MCF 10A (cell line): ENCODE measurements at regions of chr1 and their contacts with region 1.

Region 1: GRCh38 chr1:93345633-93346420 is at the start of gene DR1:
- DNase-seq: peak; percentile 92
- H3K4me3 Mint-ChIP-seq: peak within 1 kb of the TSS; percentile 98
- H3K27ac Mint-ChIP-seq: peak within 1 kb of the TSS; percentile 98
- H3K4me1 Mint-ChIP-seq: peaks cover 5% of the 10 kb centered on the region
- H3K27me3 Mint-ChIP-seq: no peaks in the 10 kb centered on the region
- CTCF ChIP-seq: no peak
- total RNA-seq, gene DR1: 103 and 104 TPM in 2 replicates

Region 2: GRCh38 chr1:93179886-93180722 is 165.7 kb before region 1 on chr1 and contains the start of gene TMED5:
- CTCF ChIA-PET with region 1: no interaction called
- POLR2A ChIA-PET with region 1: interaction called, 4 read pairs
- intact Hi-C with region 1: loop called (anchors 10 kb)
- DNase-seq: peak; percentile 99
- H3K4me3 Mint-ChIP-seq: peak within 1 kb of the TSS; percentile 93
- H3K27ac Mint-ChIP-seq: peak within 1 kb of the TSS; percentile 100
- H3K4me1 Mint-ChIP-seq: peaks cover 34% of the 10 kb centered on the region
- H3K27me3 Mint-ChIP-seq: no peaks in the 10 kb centered on the region
- CTCF ChIP-seq: peak; percentile 8
- total RNA-seq, gene TMED5: 80.5 and 86.2 TPM in 2 replicates

Region 3: GRCh38 chr1:93328809-93329760 is 16.7 kb before region 1 on chr1:
- CTCF ChIA-PET with region 1: interaction called, 6 read pairs
- POLR2A ChIA-PET with region 1: interaction called, 750 read pairs
- intact Hi-C with region 1: loop called (anchors 2 kb)
- DNase-seq: no peak
- H3K4me3 Mint-ChIP-seq: no peak overlapping the region
- H3K27ac Mint-ChIP-seq: no peak overlapping the region
- H3K4me1 Mint-ChIP-seq: peaks cover 15% of the 10 kb centered on the region
- H3K27me3 Mint-ChIP-seq: no peaks in the 10 kb centered on the region
- CTCF ChIP-seq: no peak

Region 4: GRCh38 chr1:93362237-93362636 is 16.4 kb after region 1 on chr1:
- CTCF ChIA-PET with region 1: no interaction called
- POLR2A ChIA-PET with region 1: interaction called, 750 read pairs
- intact Hi-C with region 1: no loop called
- DNase-seq: no peak
- H3K4me3 Mint-ChIP-seq: no peak overlapping the region
- H3K27ac Mint-ChIP-seq: no peak overlapping the region
- H3K4me1 Mint-ChIP-seq: peaks cover 36% of the 10 kb centered on the region
- H3K27me3 Mint-ChIP-seq: no peaks in the 10 kb centered on the region
- CTCF ChIP-seq: no peak

Region 5: DNA sequence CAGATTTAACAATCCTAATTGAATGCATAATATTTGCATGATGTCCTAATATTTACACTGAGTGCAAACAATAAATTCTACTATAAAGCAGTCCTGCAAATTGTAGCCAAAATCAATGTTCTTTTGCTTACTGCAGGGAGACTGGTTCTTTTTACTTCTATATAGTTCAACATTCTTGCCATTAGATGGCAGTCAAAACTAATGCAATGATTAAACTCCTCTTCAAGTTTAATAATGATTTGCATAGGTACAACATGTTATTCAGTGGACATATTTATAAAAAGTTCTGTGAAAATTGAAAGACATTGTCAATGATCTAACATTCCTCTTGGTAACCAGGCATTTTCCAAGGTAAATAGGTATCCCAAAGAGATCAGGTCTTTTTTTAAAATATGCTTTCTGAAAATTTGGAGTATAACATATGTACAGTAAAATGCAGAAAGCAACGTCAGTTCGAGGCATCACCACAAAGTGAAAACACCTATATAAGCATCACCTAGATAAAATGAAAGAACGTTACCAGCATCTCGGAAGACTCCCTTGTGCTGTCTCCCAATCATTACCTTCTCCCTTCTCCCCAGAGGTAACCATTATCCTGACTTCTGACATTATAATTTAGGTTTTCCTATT is 92.3 kb after region 1 on chr1:
- CTCF ChIA-PET with region 1: no interaction called
- POLR2A ChIA-PET with region 1: interaction called, 16 read pairs
- intact Hi-C with region 1: no loop called
- DNase-seq: peak; percentile 55
- H3K4me3 Mint-ChIP-seq: no peak overlapping the region
- H3K27ac Mint-ChIP-seq: no peak overlapping the region
- H3K4me1 Mint-ChIP-seq: peaks cover 6% of the 10 kb centered on the region
- H3K27me3 Mint-ChIP-seq: no peaks in the 10 kb centered on the region
- CTCF ChIP-seq: peak; percentile 45

Region 6: GRCh38 chr1:93708734-93709481 is 363.1 kb after region 1 on chr1:
- CTCF ChIA-PET with region 1: no interaction called
- POLR2A ChIA-PET with region 1: no interaction called
- intact Hi-C with region 1: no loop called
- DNase-seq: no peak
- H3K4me3 Mint-ChIP-seq: no peak overlapping the region
- H3K27ac Mint-ChIP-seq: no peak overlapping the region
- H3K4me1 Mint-ChIP-seq: peaks cover 3% of the 10 kb centered on the region
- H3K27me3 Mint-ChIP-seq: no peaks in the 10 kb centered on the region
- CTCF ChIP-seq: no peak